Posterior cingulate gyrus (tissue), 11 donors: ENCODE measurements at regions of chr2 and their contacts with region 1.

Region 1: DNA sequence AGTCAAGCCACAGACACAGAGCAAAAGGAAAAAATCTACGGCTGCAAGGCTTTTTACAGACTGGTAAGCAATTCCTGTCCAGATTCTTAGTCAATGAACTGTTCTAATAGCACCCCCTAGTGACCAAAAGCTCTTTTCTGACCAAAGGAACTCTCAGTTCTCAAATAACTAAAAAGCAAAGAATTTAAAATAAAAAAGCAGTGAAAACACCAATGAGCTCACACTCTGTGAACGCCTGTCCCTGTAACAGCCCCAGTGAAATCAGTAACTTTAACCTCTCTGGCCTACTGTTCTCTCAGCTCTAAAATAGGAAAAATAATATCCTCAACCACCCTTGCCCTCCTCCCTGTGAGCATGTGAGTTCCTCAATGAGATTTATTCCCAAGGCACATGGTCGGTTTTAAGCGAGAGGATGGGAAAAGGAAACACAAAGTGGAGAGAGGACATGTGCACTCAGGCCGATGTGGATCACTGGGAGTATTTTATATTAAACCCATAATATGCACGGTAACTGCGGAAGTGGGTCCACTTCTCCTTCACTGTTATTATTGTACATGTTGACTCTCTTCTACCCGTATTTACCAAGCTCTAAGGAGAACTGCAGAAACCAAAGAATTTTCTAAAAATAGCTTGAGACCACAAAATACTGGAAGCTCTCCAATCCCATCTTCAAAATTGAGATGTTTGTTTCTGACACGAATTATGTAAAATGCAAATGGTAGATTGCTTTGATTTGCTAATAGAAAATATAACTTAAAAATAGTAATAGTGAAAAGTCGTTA is 128.5 kb downstream of the STK39 start:
- DNase-seq: no peak

Region 2: DNA sequence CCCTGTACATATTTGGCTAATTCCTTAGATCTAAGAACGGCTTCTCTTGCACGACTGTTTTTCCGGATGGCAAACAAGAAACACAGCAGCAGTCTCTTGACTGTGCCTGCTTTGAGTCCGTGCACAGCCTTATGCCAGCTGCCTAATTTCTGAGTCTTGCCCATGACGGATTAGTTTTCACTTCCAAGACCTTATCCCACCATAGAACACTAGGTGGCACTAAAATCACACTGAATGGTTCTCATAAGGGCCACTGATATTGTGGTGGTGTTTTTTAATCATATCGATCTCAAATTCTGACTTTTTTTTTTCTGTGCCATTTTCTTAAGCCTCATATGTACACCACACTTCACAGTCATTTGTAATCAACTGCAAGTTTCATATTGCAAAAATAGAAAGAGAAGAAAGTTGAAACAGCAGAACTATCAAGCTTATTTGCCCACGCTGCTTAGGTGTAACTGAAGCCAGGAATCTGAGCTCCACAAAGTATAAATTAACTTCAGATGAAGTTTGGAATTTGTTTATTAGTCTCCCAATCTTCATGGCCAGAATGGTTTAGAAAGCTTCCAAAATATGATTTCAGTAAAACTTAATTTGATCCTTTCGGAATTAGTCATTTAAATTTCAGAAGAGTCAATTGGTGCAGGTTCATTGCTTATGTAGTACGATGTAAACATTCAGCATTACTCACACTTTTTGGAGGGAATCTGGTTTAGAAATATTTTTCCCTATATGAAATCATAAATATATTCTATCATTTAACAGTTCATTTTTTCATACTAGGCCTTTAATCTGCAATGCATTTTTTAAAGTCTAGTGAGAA is 1579.4 kb before region 1 on chr2:
- intact Hi-C with region 1: loop called (anchors 2 kb)
- DNase-seq: peak in 6 of 10 donors; percentile 4 to 69 (median 14)

Region 3: GRCh38 chr2:167292430-167293171 is 826.3 kb before region 1 on chr2:
- intact Hi-C with region 1: loop called (anchors 2 kb)
- DNase-seq: peak; percentile 77 to 98 (median 88)

Region 4: DNA sequence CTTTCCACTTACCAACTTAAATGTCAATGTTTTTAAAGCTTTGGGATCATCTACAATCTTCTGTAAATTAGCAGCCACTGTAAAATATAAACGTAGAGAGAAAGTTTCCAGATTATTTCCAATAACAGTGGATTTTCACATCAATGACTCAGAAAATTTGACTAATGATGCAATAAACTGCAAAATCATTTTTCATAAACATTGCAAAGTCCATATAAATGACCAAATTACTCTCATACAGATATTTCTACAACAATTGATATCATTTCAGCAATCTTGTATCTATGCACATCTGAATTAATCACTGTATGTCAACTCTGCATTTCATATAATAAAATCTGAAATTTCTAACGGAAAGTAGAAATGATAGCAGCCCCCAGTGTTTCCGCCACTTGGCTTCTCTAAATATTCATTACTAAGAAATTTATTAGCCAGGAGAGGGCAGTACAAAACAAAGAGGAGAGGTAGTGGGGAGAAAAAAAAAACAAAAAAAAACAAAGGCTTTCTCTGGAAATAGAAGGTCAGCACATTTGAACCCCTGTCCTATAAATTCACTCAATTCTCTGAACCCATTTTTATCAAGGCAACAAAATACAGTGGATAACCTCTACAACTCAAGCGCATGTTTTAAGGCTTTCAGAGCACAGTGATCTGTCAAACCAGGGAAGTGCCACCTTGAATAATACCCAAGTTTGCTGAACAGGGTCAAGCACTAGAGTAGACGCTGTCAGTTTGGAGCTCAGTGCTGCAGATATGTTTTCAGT is 154.1 kb before region 1 on chr2:
- intact Hi-C with region 1: loop called (anchors 1 kb)
- DNase-seq: no peak

Region 5: GRCh38 chr2:168090366-168091135 is 28.4 kb before region 1 on chr2:
- intact Hi-C with region 1: no loop called
- DNase-seq: no peak